ENCODE measurements at regions of chr14 and their contacts with region 1.

Region 1: DNA sequence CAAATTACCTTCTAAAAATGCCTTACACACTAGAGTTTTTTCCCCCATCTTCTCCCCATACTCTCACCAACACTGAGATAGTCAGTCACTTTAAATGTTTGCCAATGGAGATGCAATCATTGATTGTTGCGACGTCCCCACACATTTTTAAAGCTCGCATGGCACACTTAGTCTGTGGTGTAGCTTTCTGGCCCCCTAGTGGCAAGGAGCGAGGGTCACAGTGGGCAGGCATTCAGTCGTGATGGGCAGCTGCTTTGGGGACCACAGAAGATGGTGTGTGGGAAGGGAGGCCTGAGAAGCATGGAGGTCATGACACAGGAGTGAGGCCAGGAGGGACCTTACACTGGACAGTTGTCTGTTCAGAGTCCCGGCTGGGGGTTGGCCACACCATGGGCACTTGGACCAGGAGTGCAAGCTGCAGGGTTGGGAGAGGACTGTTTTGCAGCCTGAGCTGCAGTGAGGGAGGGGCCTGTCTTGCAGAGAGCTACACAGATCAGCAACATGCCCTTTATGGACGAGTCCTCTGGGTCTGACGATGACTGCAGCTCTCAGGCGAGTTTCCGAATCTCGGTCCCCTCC is 28.7 kb downstream of the PIGH start:
- DNase-seq: peak; percentile 61
- H3K27ac ChIP-seq: no peak overlapping the region
- CTCF ChIP-seq: peak; percentile 91

Region 2: GRCh38 chr14:67420102-67420830 is 151.1 kb before region 1 on chr14:
- CTCF ChIA-PET with region 1: interaction called, 10 read pairs
- POLR2A ChIA-PET with region 1: no interaction called
- DNase-seq: no peak
- H3K27ac ChIP-seq: peak overlapping the region; percentile 90
- CTCF ChIP-seq: no peak

Region 3: GRCh38 chr14:67426983-67427606 is 144.3 kb before region 1 on chr14:
- CTCF ChIA-PET with region 1: interaction called, 66 read pairs
- POLR2A ChIA-PET with region 1: no interaction called
- DNase-seq: peak; percentile 83
- H3K27ac ChIP-seq: 0 out of 2 replicates have a peak overlapping the region, but pooled peaks have one; percentile 16
- CTCF ChIP-seq: peak; percentile 79

Region 4: DNA sequence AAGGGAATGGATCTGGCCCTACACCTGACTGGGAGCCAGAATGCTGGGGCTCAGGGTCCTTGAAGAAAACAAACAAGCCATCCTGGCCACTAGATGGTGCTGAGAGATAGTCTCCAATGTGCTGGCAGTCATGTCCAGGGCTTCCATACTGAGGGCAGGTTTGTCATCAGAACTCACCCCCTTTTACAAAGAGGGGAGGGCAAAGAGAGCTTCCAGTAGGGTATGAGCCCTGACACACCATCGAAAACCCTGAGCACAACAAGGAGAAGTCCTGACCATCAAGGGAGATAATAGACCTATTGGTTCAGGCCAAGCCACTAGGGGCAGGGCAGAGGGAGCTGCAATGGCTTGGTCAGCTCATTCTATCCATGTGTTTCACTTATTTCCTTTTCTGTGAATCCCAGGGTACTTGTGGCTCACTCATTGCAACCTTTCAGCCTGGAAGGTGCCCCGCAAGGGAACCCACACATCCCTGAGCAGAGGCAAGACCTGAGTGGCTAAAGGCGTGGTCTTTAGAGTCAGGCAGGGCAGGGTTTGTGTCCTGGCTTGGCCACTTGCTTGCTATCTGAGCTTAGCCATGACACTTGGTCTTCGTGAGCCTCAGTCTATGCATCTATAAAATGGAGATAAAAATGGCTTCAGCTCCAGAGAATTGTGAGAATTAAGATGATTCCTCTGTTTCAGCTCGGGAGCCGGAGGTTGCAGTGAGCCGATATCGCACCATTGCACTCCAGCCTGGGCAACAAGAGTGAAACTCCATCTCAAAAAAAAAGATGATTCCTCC is 44.5 kb before region 1 on chr14:
- CTCF ChIA-PET with region 1: interaction called, 84 read pairs
- POLR2A ChIA-PET with region 1: interaction called, 5 read pairs
- DNase-seq: peak; percentile 55
- H3K27ac ChIP-seq: no peak overlapping the region
- CTCF ChIP-seq: peak; percentile 83

Region 5: DNA sequence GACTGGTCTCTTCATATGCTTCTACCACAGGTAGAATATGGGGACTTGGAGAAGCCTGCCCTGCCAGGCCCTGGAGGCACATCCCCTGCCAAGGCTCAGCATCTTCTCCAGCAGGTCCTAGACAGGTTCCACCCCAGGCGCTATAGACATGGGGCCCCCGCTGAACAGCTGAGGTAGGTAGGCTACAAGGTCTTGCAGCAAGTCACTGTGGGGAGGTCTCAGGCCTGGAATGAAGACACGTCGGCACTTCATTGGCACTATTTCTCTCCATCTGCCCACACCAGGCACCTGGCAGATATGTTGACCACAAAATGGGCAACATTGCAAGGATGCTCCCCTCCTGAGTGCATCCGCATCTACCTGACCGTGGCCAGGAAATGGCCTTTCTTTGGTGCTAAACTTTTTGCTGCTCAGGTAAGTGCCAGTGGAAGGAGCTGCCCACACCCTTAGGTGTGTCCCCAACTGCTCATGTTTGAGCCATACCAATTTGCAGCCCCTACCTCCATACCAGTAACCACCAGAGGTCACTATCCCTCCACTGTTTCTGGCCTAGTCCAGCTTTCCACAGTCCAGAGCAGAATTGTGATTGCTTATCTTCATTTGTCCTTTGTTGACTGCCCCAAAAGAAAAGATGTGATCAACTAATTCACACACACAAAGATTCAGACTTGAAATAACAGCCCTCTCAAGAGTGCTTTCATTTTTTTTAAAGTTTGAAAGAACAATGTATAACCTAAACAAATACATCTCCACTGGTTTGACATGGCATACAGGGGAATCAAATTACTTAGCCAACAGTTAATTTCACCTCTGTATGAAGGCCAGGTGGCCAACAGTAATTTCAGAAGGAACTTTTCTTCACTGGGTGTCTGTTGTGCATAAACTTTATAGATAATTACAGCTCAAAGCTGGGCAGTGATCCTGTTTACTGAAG is 12.6 kb after region 1 on chr14:
- CTCF ChIA-PET with region 1: interaction called, 20 read pairs
- POLR2A ChIA-PET with region 1: no interaction called
- DNase-seq: peak; percentile 77
- H3K27ac ChIP-seq: no peak overlapping the region
- CTCF ChIP-seq: peak; percentile 77

Region 6: DNA sequence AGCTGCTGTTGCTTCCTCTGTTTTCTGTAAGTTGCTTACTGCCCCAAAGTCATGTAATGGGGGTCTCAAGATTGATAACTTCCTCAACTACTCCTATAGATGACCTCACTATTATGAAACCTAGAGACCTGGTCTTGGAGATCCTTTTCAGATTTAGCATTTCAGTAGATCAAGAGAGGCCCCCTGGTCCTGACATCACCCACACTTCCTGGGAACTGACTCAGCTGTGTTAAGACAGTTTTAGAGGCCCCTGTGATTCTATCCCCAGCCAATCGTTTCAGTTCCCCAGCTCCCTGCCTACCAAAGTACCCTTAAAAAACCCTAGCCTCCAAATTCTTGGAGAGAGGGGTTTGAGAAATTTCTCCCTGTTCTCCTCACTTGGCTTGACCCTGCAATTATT is 39.1 kb after region 1 on chr14:
- CTCF ChIA-PET with region 1: no interaction called
- POLR2A ChIA-PET with region 1: no interaction called
- DNase-seq: no peak
- H3K27ac ChIP-seq: no peak overlapping the region
- CTCF ChIP-seq: no peak

Measured in RWPE1 (cell line).